ENCODE measurements at regions of chr4 and their contacts with region 1.

Region 1: GRCh38 chr4:83889802-83890201 is 353.9 kb downstream of the GPAT3 start:
- DNase-seq: peak in 1 of 2 experiments; percentile 66
- H3K4me3 ChIP-seq: no peak overlapping the region
- H3K27ac ChIP-seq: peak overlapping the region; percentile 75
- H3K4me1 ChIP-seq: peaks cover 21% of the 10 kb centered on the region
- H3K27me3 ChIP-seq: no peaks in the 10 kb centered on the region
- CTCF ChIP-seq: no peak

Region 2: GRCh38 chr4:83308672-83309071 is 581.1 kb before region 1 on chr4:
- CTCF ChIA-PET with region 1: no interaction called
- POLR2A ChIA-PET with region 1: no interaction called
- intact Hi-C with region 1: no loop called
- DNase-seq: no peak
- H3K4me3 ChIP-seq: no peak overlapping the region
- H3K27ac ChIP-seq: no peak overlapping the region
- H3K4me1 ChIP-seq: no peaks in the 10 kb centered on the region
- H3K27me3 ChIP-seq: no peaks in the 10 kb centered on the region
- CTCF ChIP-seq: no peak

Region 3: GRCh38 chr4:83830138-83830888 is 59.5 kb before region 1 on chr4:
- CTCF ChIA-PET with region 1: no interaction called
- POLR2A ChIA-PET with region 1: no interaction called
- intact Hi-C with region 1: no loop called
- DNase-seq: no peak
- H3K4me3 ChIP-seq: no peak overlapping the region
- H3K27ac ChIP-seq: no peak overlapping the region
- H3K4me1 ChIP-seq: no peaks in the 10 kb centered on the region
- H3K27me3 ChIP-seq: no peaks in the 10 kb centered on the region
- CTCF ChIP-seq: no peak

Region 4: DNA sequence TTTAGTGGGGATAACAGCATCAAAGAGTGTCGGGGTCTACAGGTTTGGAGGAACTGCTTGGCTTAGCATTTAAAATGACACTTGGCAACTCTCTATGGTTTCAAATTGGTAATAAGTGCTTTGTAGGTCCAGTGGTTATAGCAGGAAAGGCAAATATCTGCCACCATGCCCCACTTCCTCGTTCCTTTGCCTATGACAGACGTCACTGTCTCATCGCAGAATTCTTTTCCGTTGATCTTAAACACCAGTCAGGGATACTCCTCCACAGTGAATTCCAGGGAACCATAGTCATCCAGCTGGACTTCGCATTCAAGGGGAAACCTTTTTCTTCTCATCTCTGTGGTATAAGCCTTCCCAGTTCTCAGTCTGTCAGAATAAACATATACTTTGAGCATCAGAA is 34.8 kb before region 1 on chr4:
- CTCF ChIA-PET with region 1: no interaction called
- POLR2A ChIA-PET with region 1: interaction called, 8 read pairs
- intact Hi-C with region 1: loop called (anchors 1 kb)
- DNase-seq: peak; percentile 61 to 82
- H3K4me3 ChIP-seq: no peak overlapping the region
- H3K27ac ChIP-seq: peak overlapping the region; percentile 55
- H3K4me1 ChIP-seq: peaks cover 40% of the 10 kb centered on the region
- H3K27me3 ChIP-seq: no peaks in the 10 kb centered on the region
- CTCF ChIP-seq: no peak

Region 5: GRCh38 chr4:84189144-84189543 is 299.3 kb after region 1 on chr4:
- CTCF ChIA-PET with region 1: no interaction called
- POLR2A ChIA-PET with region 1: no interaction called
- intact Hi-C with region 1: no loop called
- DNase-seq: no peak
- H3K4me3 ChIP-seq: no peak overlapping the region
- H3K27ac ChIP-seq: no peak overlapping the region
- H3K4me1 ChIP-seq: no peaks in the 10 kb centered on the region
- H3K27me3 ChIP-seq: no peaks in the 10 kb centered on the region
- CTCF ChIP-seq: no peak

Measured in PC-9 (cell line).